Right ventricle myocardium inferior (tissue), 1 donor: ENCODE measurements at regions of chr5 and their contacts with region 1.

Region 1: GRCh38 chr5:140725799-140726471 is 25.7 kb downstream of the ZMAT2 start:
- DNase-seq: no peak
- ATAC-seq: peak; percentile 8

Region 2: GRCh38 chr5:140207250-140207964 is 518.5 kb before region 1 on chr5:
- intact Hi-C with region 1: no loop called
- DNase-seq: no peak
- ATAC-seq: no peak

Region 3: GRCh38 chr5:140372971-140373487 is 352.9 kb before region 1 on chr5:
- intact Hi-C with region 1: loop called (anchors 5 kb)
- DNase-seq: peak; percentile 79
- ATAC-seq: peak; percentile 73